IMR-90 (cell line): ENCODE measurements at regions of chr2 and their contacts with region 1.

Region 1: DNA sequence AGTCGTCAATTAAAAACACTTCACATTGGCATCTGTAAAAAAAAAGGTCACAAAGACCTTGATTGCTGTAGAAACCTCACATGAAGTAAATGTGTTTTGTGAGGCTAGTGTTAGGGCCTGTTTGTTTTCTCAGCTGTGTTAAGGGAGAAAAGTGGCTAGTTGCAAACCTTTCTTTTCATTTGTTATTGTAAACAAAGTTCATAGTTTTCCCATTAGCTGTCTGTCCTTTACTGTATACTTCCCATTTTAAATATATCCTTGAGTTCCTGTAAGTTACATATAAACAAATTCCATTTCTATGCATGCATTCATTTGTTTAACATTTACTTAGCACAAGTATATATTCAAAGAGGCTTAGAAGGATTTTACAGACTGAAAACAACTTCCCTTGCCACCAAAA is 1250.2 kb downstream of the LRP1B start:
- DNase-seq: peak; percentile 91
- ATAC-seq: peak; percentile 89
- H3K4me3 ChIP-seq: no peak overlapping the region
- H3K27ac ChIP-seq: peak overlapping the region; percentile 73; the same call in 1 of the 2 replicates
- H3K4me1 ChIP-seq: peaks cover 7% of the 10 kb centered on the region; the same call in 1 of the 2 replicates
- H3K27me3 ChIP-seq: no peaks in the 10 kb centered on the region
- CTCF ChIP-seq: no peak
- POLR2A ChIP-seq: no peak
- RAD21 ChIP-seq: no peak

Region 2: DNA sequence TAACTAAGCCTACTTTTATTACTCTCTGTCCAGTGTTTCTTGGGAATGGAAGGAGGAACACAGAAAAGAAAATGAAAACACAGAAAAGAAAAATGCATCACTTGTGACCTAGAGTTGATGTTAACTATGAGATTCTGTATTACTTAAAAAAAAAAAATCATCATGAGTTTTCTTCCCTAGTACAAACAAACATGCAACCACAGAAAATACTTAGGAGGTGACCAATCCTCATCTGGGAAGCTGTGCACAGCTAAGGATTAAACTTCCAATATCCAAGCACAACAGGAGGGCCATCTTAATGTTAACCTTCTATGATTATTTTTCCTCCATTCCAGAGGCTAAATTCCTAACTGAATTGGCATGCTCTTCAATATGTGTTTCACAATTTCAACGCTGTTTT is 109.8 kb after region 1 on chr2:
- CTCF ChIA-PET with region 1: no interaction called
- POLR2A ChIA-PET with region 1: no interaction called
- dilution Hi-C with region 1: no loop called
- in situ Hi-C with region 1: no loop called
- intact Hi-C with region 1: loop called (anchors 2 kb)
- DNase-seq: peak; percentile 94
- ATAC-seq: peak; percentile 97
- H3K4me3 ChIP-seq: no peak overlapping the region
- H3K27ac ChIP-seq: peak overlapping the region; percentile 85; the same call in 1 of the 2 replicates
- H3K4me1 ChIP-seq: peaks cover 2% of the 10 kb centered on the region
- H3K27me3 ChIP-seq: no peaks in the 10 kb centered on the region
- CTCF ChIP-seq: no peak
- POLR2A ChIP-seq: no peak
- RAD21 ChIP-seq: no peak